Pancreas (tissue), 10 donors: ENCODE measurements at regions of chr20 and their contacts with region 1.

Region 1: GRCh38 chr20:25065625-25066338 is 7.8 kb upstream of the ACSS1 start:
- DNase-seq: peak in 2 of 6 donors; percentile 47 to 70
- ATAC-seq: peak; percentile 74 to 88 (median 82)
- H3K4me3 ChIP-seq: no peak overlapping the region
- H3K27ac ChIP-seq: no peak overlapping the region
- H3K4me1 ChIP-seq: peaks cover 9 to 24% (median 14%) of the 10 kb centered on the region in 3 donors
- H3K27me3 ChIP-seq: no peaks in the 10 kb centered on the region
- CTCF ChIP-seq: peak; percentile 35 to 58 (median 58)

Region 2: DNA sequence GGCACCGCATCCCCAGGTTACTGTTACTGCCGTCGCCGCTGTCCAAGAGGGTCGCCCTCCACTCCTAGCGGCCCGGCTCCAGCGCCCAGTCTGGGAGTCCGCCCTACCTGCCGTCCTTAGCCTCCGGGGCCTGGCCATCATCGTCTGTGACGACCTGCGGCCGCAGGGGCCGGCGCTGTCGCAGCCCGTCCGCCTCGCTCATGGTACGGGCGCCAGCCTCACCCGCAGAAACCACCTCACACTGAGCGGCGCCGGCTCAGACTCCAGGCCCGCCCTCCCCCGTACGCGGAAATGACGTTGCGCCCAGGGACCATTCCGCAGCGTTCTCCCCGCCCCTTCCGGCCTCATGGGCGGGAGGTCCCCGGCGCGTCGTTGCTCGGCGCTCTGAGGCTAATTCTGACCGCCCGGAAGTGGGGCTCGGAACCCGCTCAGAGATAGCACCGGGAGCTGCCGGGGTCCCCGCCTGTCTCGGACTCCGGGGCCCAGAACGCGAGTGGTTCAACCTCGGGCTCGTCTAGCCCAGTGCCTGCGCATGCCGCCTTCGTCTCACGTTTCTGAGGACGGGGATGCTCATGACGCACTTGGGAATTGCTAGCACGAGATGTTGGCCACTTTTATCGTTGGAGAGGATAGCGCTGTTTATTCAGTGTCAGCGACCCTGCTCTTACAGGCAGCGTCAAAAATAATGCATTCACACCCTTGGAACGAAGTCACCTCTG is 73.1 kb before region 1 on chr20 and contains the start of gene APMAP:
- intact Hi-C with region 1: loop called (anchors 2 to 10 kb)
- DNase-seq: peak; percentile 93 to 97 (median 96)
- ATAC-seq: peak; percentile 94 to 97 (median 96)
- H3K4me3 ChIP-seq: peak within 1 kb of the TSS; percentile 48 to 90 (median 68)
- H3K27ac ChIP-seq: peak within 1 kb of the TSS; percentile 84 to 96 (median 90)
- H3K4me1 ChIP-seq: peaks cover 5 to 32% (median 8%) of the 10 kb centered on the region in 3 donors
- H3K27me3 ChIP-seq: no peaks in the 10 kb centered on the region
- CTCF ChIP-seq: no peak
- total RNA-seq, gene APMAP: 20.8 to 39.2 (median 28.4) TPM